Natural killer cell (primary cell): ENCODE measurements at regions of chr16 and their contacts with region 1.

Region 1: GRCh38 chr16:8880839-8881510 is 1.2 kb upstream of the LITAFD start:
- DNase-seq: no peak
- ATAC-seq: no peak
- H3K4me3 ChIP-seq: no peak overlapping the region
- H3K4me3 Mint-ChIP-seq: no peak overlapping the region
- H3K27ac ChIP-seq: no peak overlapping the region
- H3K27ac Mint-ChIP-seq: no peak overlapping the region
- H3K4me1 ChIP-seq: peaks cover 16% of the 10 kb centered on the region
- H3K4me1 Mint-ChIP-seq: peaks cover 10 to 15% of the 10 kb centered on the region in 2 donors
- H3K27me3 ChIP-seq: no peaks in the 10 kb centered on the region
- H3K27me3 Mint-ChIP-seq: peaks cover 0 to 8% of the 10 kb centered on the region in 2 donors
- CTCF ChIP-seq: no peak

Region 2: DNA sequence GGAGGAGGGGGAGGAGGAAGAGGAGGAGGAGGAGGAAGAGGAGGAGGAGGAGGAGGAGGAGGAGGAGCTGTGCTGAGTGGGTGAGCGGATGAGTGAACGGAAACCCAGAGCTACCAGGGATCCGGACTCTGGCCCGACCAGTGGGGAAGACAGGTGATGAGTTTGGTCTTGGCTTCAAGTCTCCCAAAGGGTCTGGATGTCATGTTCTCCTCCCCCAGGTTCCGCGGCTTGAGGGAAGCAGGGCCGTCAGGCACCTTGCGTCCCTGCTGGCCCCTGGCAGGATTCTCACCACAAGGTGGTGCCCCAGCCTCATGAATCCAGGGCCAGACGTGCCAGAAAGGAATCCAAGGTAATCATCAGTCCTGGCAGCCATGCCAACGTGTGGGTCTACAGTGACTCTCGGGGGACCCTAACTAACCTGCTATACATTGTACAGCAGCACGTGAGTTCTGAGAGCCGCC is 220.1 kb before region 1 on chr16:
- intact Hi-C with region 1: loop called (anchors 1 kb)
- DNase-seq: peak; percentile 31 to 64
- ATAC-seq: peak; percentile 46 to 60 (median 50)
- H3K4me3 ChIP-seq: no peak overlapping the region
- H3K4me3 Mint-ChIP-seq: no peak overlapping the region
- H3K27ac ChIP-seq: no peak overlapping the region
- H3K27ac Mint-ChIP-seq: no peak overlapping the region
- H3K4me1 ChIP-seq: no peaks in the 10 kb centered on the region
- H3K4me1 Mint-ChIP-seq: no peaks in the 10 kb centered on the region
- H3K27me3 ChIP-seq: no peaks in the 10 kb centered on the region
- H3K27me3 Mint-ChIP-seq: no peaks in the 10 kb centered on the region
- CTCF ChIP-seq: peak; percentile 13